ENCODE measurements at regions of chr7 and their contacts with region 1.

Region 1: DNA sequence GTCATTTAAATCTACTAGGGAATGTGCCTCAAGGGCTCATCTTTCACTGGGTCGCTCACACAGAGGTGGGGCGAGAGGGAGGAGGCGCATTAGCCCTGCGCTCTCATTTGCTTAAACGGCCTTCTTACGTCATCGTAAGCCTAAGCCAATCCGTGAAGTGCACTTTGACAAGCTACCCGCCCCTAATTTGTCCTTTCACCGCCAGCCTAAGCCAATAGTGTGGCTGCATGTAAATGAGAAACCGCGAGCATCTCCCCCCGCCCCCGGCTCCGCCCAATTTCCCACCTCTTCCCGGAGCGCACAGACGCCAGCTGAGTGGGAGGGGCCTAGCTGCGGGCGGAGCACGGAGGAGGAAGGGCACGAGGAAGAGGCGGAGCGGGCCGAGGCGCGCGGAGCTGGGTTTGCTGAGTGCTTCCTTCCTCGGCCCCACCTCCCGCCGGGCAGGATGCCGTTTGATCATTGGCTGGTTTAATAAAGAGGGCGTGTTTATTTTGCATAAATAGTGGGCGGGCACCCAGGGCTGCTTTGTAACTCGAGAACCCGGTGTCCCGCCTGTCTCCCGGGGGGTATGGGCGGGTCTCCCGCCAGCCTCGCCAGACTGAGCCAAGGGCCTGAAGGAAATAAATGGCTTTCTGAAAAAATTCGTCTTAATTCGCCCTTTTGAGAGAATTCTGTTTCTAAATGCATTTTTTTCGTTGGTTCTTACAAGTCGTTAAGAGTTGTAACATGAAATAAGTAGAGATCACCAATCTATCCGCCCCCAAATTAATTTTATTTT is 289.5 kb upstream of the NFE2L3 start:
- DNase-seq: peak; percentile 97
- H3K4me3 Mint-ChIP-seq: peak overlapping the region; percentile 83
- H3K27ac Mint-ChIP-seq: peak overlapping the region; percentile 86
- H3K4me1 Mint-ChIP-seq: peaks cover 46% of the 10 kb centered on the region
- H3K27me3 Mint-ChIP-seq: peaks cover 57% of the 10 kb centered on the region

Region 2: GRCh38 chr7:24283897-24284698 is 1578.4 kb before region 1 on chr7 and contains the start of gene NPY:
- intact Hi-C with region 1: loop called (anchors 10 kb)
- DNase-seq: no peak
- H3K4me3 Mint-ChIP-seq: peak within 1 kb of the TSS; percentile 65
- H3K27ac Mint-ChIP-seq: no peak within 1 kb of the TSS
- H3K4me1 Mint-ChIP-seq: peaks cover 5% of the 10 kb centered on the region
- H3K27me3 Mint-ChIP-seq: peaks cover 53% of the 10 kb centered on the region
- total RNA-seq, gene NPY: not detected in 2 replicates

Region 3: GRCh38 chr7:25125137-25125946 is 737.1 kb before region 1 on chr7 and contains the start of gene CYCS:
- intact Hi-C with region 1: loop called (anchors 2 kb)
- DNase-seq: peak; percentile 100
- H3K4me3 Mint-ChIP-seq: peak within 1 kb of the TSS; percentile 93
- H3K27ac Mint-ChIP-seq: peak within 1 kb of the TSS; percentile 99
- H3K4me1 Mint-ChIP-seq: peaks cover 29% of the 10 kb centered on the region
- H3K27me3 Mint-ChIP-seq: no peaks in the 10 kb centered on the region
- total RNA-seq, gene CYCS: 280 TPM in 2 replicates

Region 4: DNA sequence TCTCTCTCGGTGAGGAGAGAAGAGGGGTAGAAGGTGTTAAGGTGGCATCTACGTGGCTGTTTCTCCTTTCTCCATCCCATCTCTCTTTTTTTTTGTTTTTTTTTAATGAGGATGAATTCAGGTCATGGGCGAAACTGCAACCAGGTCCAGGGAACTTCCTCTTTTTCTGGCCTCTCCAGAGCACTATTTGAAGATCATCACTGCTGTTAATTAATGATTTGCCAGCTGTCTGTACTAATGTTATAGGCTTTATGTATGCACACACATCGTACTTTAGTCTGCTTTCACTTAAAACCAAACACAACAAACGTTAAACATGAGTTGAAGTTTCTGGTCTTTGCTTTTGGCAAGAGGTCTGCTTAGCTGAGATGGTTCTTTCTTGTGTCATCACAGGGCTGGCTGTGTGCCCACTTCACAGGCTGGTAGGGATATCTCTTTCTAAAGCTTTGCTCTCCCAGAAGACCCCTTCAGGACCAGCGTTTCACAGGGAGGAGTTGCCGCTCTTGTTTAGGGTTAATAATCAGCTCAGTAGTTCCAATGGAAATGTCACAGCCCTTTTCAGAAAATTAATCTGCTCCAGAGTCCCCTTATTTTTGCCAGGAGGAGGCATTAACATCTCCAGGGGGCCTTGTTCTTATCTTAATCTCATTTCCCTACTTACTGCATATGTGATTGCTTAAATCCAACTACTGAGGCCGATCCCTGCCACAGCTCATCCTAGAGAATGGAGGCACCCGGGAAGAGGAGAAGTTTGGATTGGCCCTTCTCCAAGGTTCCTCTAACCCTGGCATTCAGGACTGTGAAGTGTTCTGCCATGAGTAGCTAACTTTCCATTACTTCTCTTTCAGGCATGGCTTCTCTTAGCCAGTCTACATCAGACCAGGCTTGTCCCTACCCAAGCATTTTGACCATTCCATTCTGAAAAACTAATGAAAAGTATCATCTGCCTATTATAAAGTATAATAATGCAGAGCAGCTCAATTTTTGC is 15.6 kb after region 1 on chr7:
- intact Hi-C with region 1: no loop called
- DNase-seq: no peak
- H3K4me3 Mint-ChIP-seq: no peak overlapping the region
- H3K27ac Mint-ChIP-seq: no peak overlapping the region
- H3K4me1 Mint-ChIP-seq: no peaks in the 10 kb centered on the region
- H3K27me3 Mint-ChIP-seq: peaks cover 54% of the 10 kb centered on the region

Region 5: DNA sequence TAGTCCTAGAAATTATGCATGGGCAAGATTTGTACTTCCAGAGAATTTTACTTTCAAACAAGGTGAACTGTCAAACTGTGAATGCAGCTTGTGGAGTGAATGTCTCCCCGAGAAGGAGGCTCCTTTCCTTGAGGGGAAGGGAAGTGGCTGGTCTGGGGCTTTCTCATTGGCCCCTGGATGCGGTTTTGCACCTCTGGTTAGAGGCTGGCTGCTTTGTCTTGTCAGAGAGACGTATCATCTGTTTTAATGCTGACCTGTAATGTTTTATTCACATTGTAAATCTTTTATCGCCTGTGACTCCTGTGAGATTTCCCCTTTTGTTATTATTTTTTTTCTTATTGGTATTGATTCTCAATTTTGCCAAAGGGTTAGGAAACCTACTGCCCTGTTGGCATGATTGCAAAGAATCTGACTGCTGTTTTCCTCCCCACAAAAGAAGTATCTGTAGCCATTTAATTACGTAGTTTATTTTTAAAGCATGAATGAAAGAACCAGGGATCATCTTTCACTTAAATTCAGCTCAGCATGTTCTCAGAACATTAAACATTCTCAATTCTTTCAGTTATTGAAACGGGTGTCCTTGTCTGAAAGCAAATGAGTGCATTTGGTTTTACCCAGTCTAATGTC is 51.3 kb after region 1 on chr7:
- intact Hi-C with region 1: no loop called
- DNase-seq: no peak
- H3K4me3 Mint-ChIP-seq: no peak overlapping the region
- H3K27ac Mint-ChIP-seq: no peak overlapping the region
- H3K4me1 Mint-ChIP-seq: no peaks in the 10 kb centered on the region
- H3K27me3 Mint-ChIP-seq: peaks cover 18% of the 10 kb centered on the region

Region 6: GRCh38 chr7:25951031-25951948 is 88.8 kb after region 1 on chr7:
- intact Hi-C with region 1: loop called (anchors 1 kb)
- DNase-seq: peak; percentile 87
- H3K4me3 Mint-ChIP-seq: peak overlapping the region; percentile 91
- H3K27ac Mint-ChIP-seq: peak overlapping the region; percentile 74
- H3K4me1 Mint-ChIP-seq: peaks cover 17% of the 10 kb centered on the region
- H3K27me3 Mint-ChIP-seq: peaks cover 5% of the 10 kb centered on the region

Region 7: DNA sequence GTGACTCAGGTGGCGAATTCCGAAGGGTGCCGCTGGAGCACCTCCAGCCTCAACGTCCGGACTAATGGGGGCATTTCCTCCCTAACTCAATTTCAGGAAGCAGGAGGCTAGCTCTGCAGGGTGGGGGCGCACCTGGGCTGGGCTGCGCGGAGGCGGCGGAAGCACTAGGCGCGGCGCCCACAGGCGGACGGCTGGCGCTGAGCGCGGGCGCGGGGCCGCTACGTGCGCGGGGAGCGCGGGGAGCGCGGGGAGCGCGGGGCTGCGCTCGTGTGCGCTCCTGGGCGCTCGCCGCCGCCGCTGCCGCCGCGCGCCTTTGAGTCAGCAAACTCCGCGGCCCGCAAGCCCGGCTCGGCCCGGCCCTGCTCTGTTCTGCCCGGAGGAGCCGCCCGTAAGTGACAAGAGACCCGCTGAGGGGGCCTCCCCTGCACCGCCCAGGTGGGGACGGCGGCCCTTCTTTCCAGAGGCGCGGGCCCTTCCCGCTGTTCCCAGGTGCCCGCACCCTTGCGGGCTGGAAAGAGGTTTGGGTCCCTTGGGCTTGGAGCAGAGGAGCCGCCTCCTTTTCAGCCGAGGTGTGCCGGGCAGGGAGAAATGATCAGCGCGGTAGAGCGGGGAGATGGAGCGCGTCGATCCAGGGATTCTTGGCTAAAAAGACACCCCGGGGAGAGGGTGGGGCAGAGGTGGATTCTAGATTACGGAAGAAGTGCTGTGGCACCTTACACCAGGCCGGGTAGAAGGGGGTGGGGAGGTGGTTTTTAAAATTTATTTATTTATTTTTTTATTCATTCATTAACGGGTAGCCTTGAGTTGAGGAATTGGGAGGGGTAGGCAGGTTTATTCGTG is 429.5 kb after region 1 on chr7 and contains the start of gene SNX10:
- intact Hi-C with region 1: loop called (anchors 1 kb)
- DNase-seq: peak; percentile 63
- H3K4me3 Mint-ChIP-seq: peak within 1 kb of the TSS; percentile 92
- H3K27ac Mint-ChIP-seq: peak within 1 kb of the TSS; percentile 92
- H3K4me1 Mint-ChIP-seq: peaks cover 40% of the 10 kb centered on the region
- H3K27me3 Mint-ChIP-seq: no peaks in the 10 kb centered on the region
- total RNA-seq, gene SNX10: 41.9 and 48.3 TPM in 2 replicates

Region 8: DNA sequence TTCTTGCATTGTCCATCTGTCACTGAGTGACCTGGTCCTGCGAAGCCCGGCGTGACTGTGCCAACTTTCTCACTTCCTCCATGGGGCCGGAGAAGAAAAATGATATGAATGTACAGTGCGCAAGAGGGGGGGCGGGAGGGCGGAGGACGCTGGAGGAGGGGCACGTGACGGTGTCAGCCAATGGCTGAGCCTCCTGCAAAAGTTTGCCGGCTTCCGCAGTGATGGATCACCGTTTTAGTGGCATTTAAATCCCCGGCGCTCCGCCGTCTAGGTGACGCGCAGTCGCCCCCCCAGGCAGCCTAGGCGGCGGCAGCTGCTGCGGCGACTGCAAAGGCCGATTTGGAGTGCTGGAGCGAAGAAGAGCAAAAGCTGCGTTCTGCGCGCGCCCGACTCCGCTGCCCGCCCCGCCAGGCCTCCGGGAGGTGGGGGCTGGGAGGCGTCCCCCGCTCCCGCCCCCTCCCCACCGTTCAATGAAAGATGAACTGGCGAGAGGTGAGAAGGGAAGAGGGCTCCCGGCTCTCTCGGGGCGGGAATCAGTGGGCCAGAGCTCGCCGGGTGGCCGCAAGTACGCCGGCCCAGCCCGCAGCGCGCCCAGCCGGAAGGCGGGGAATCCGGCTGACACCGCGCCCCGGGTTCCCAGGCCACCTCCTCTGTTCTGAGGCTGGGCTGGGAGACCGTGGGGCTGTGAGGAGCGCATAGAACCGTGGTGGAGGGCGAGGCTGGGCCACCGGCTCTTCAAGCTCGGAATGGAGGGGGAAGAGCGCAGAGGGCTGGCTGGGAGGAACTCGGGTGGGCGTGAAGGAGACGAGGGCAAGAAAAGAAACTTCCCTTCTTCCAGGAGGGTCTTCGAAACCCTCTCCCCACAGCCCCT is 1233.7 kb after region 1 on chr7 and contains the start of gene HOXA1:
- intact Hi-C with region 1: loop called (anchors 2 kb)
- DNase-seq: peak; percentile 48
- H3K4me3 Mint-ChIP-seq: peak within 1 kb of the TSS; percentile 85
- H3K27ac Mint-ChIP-seq: peak within 1 kb of the TSS; percentile 73
- H3K4me1 Mint-ChIP-seq: peaks cover 18% of the 10 kb centered on the region
- H3K27me3 Mint-ChIP-seq: peaks cover 76% of the 10 kb centered on the region
- total RNA-seq, gene HOXA1: 0.16 and 0.24 TPM in 2 replicates

Measured in activated T-helper 1 cell treated with anti-CD3 and anti-CD28 coated beads, Interleukin-12 subunit alpha, Interleukin-12 subunit beta, Interleukin-2, Interleukin-4 antibody, amounts not matched to agents 30 ng/mL and 10 ng/mL and 1 ng/mL, durations not matched to agents 14 hours and 24 hours and 36 hours (primary cell).